ENCODE measurements at regions of chr10 and their contacts with region 1.

Region 1: DNA sequence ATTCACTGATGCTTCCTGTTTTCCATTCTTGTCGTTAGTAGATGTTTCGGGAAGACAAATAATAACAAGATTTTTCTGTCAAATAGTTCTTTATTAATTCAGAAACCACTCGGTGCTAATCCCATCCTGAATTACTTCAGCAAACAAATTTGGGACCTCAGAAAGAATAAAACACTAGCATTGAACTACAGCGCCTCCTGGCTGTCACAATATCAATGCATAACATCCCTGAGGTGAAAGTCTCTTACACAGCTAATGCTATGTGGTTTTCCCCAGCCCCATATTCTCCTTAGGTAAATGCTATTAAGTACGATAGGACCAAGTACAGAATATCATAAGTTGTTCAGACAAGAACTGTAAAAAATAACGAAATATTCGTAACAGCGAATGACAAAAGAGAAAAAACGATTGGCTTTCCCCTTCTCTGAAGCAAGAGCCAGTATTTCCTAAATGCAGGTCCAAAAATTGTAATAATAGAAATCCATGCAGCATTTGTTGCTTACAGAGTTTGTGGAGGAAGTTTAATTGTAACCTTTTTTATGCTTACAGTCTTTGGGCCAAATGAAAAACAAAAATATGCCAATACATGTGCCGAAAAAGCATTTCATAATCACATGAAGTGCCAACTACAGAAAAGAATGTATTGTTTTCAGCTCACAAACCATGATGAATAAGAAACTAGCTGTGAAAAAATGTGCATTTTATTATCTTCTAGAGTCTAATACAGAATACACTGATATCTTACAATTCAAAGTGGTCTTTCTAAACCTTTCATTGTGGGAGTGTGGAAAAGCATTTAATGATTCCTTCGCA is 47.3 kb downstream of the MYPN start:
- DNase-seq: peak; percentile 44 to 77 (median 48)
- ATAC-seq: peak; percentile 90
- H3K4me3 ChIP-seq: no peak overlapping the region
- H3K27ac ChIP-seq: no peak overlapping the region
- H3K4me1 ChIP-seq: no peaks in the 10 kb centered on the region
- H3K27me3 ChIP-seq: peaks cover 3 to 4% of the 10 kb centered on the region in 2 experiments; a peak in 4 of 5 replicates
- CTCF ChIP-seq: peak; percentile 77 to 95 (median 87)
- EP300 ChIP-seq: no peak
- POLR2A ChIP-seq: no peak
- RAD21 ChIP-seq: peak; percentile 90 to 97

Region 2: DNA sequence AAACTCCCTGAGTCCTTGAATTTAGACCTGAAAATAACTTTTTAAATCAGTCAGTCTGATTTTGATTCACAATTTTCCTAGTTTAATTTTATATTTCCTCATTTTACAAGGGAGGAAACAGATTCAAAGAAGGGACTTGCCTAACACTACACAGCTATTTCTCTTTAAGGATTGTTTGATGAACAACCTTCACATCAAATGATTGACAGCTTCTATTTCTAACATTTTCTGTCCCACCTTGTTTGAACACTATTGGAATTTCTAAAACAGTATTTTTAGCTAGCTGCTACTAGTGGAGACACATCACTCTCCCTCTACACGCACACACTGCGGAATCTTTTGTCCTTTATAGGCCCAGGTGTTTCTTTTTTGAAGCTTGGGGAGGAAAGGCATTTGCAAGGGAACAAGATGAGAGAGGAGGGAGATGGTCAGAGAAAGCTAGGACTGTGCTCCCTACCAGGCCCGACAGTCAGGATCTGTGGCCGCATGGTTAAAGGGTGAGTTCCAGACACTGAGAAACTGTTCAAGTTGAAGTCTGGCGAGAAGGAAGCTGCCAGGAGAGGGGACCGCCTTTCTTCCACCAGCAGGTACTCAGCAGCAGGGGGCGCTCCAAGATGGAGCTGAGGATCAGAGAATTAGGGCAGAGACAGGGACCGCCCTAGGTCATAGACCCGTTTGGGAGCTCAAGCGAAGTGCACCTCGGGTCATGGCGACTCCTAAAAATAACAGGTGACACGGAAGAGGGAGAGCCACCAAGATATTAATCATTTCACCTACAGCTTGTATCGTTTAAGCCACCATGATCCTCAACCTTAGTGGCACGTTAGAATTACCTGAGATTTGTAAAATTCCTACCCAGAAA is 368.3 kb before region 1 on chr10:
- CTCF ChIA-PET with region 1: interaction called, 20 read pairs
- POLR2A ChIA-PET with region 1: no interaction called
- in situ Hi-C with region 1: loop called (anchors 5 kb)
- intact Hi-C with region 1: loop called (anchors 1 kb)
- DNase-seq: peak; percentile 84 to 90 (median 88)
- ATAC-seq: peak; percentile 89
- H3K4me3 ChIP-seq: no peak overlapping the region
- H3K27ac ChIP-seq: no peak overlapping the region
- H3K4me1 ChIP-seq: peaks cover 0 to 14% of the 10 kb centered on the region in 2 experiments; a peak in 4 of 5 replicates
- H3K27me3 ChIP-seq: no peaks in the 10 kb centered on the region
- CTCF ChIP-seq: peak; percentile 87 to 95 (median 94)
- EP300 ChIP-seq: no peak
- POLR2A ChIP-seq: no peak
- RAD21 ChIP-seq: peak; percentile 95 to 98

Region 3: DNA sequence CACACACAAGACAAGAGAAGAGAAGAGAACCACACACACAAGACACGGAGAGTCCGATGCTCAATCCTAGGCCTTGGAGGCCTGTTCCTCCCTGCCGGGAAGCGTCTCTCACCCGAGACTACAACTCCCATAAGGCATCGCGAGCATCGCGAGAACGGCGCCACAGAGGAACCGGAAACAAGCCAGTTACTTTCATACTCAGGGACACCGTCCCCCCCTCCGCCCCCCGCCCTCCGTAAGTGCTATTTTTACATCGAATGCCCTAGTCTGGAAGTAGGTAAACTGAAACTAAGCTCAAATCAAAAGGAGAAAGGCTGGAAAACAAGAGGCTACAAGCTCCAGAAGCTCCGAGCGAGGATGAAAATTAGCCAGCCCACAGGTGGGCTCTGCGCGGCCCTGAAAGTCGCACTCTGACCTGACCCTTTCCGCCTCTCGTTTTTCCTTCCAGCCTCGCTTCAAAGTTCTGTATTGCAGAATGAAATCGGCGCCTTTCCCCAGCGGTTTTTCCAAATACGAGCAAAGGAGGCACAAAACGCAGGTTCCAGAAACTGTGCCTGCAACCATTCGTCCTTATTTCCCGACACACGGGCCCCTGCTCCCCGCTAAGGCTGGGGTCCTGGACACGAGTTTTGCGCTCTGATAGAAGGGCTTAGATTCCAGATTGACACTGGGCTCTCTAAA is 307.1 kb before region 1 on chr10:
- CTCF ChIA-PET with region 1: interaction called, 24 read pairs
- POLR2A ChIA-PET with region 1: no interaction called
- in situ Hi-C with region 1: no loop called
- intact Hi-C with region 1: no loop called
- DNase-seq: peak; percentile 92 to 99 (median 94)
- ATAC-seq: peak; percentile 99
- H3K4me3 ChIP-seq: peak overlapping the region; percentile 52
- H3K27ac ChIP-seq: peak overlapping the region; percentile 90
- H3K4me1 ChIP-seq: peaks cover 7 to 8% of the 10 kb centered on the region in 2 experiments; a peak in 4 of 5 replicates
- H3K27me3 ChIP-seq: no peaks in the 10 kb centered on the region
- CTCF ChIP-seq: peak in 1 of 3 experiments; percentile 41; a peak in 2 of 6 replicates
- EP300 ChIP-seq: no peak
- POLR2A ChIP-seq: peak; percentile 91
- RAD21 ChIP-seq: peak in 1 of 2 experiments; percentile 5; a peak in 1 of 4 replicates

Region 4: GRCh38 chr10:67943909-67944308 is 212.7 kb before region 1 on chr10:
- CTCF ChIA-PET with region 1: no interaction called
- POLR2A ChIA-PET with region 1: no interaction called
- in situ Hi-C with region 1: no loop called
- intact Hi-C with region 1: no loop called
- DNase-seq: no peak
- ATAC-seq: no peak
- H3K4me3 ChIP-seq: no peak overlapping the region
- H3K27ac ChIP-seq: no peak overlapping the region
- H3K4me1 ChIP-seq: no peaks in the 10 kb centered on the region
- H3K27me3 ChIP-seq: no peaks in the 10 kb centered on the region
- CTCF ChIP-seq: no peak
- EP300 ChIP-seq: no peak
- POLR2A ChIP-seq: no peak
- RAD21 ChIP-seq: no peak

Region 5: DNA sequence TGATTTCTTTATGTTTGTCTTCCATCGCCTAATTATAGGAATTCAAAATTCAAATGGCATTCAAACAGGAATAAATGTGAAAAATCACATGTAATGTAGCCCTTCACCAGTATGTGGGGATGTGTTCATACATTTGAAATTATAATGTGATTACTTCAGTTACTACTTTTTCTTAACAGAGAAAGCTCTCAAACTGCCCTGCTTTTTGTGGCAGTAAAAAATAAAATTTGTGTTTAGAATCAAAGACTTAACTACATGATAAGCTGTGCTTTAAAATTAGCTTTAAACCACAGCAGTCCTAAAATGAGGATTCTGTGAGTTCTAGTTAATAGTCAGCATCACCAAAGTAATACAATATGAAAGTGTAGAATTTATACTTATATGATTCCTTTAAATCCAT is 73.7 kb before region 1 on chr10:
- CTCF ChIA-PET with region 1: no interaction called
- POLR2A ChIA-PET with region 1: interaction called, 3 read pairs
- in situ Hi-C with region 1: no loop called
- intact Hi-C with region 1: loop called (anchors 5 kb)
- DNase-seq: no peak
- ATAC-seq: peak; percentile 24; the same call in 1 of the 3 replicates
- H3K4me3 ChIP-seq: no peak overlapping the region
- H3K27ac ChIP-seq: no peak overlapping the region
- H3K4me1 ChIP-seq: no peaks in the 10 kb centered on the region
- H3K27me3 ChIP-seq: no peaks in the 10 kb centered on the region
- CTCF ChIP-seq: peak in 1 of 3 experiments; percentile 35; a peak in 2 of 6 replicates
- EP300 ChIP-seq: no peak
- POLR2A ChIP-seq: no peak
- RAD21 ChIP-seq: peak; percentile 10 to 44; a peak in 2 of 4 replicates

Measured in K562 (cell line).